MCF 10A (cell line): ENCODE measurements at regions of chr14 and their contacts with region 1.

Region 1: DNA sequence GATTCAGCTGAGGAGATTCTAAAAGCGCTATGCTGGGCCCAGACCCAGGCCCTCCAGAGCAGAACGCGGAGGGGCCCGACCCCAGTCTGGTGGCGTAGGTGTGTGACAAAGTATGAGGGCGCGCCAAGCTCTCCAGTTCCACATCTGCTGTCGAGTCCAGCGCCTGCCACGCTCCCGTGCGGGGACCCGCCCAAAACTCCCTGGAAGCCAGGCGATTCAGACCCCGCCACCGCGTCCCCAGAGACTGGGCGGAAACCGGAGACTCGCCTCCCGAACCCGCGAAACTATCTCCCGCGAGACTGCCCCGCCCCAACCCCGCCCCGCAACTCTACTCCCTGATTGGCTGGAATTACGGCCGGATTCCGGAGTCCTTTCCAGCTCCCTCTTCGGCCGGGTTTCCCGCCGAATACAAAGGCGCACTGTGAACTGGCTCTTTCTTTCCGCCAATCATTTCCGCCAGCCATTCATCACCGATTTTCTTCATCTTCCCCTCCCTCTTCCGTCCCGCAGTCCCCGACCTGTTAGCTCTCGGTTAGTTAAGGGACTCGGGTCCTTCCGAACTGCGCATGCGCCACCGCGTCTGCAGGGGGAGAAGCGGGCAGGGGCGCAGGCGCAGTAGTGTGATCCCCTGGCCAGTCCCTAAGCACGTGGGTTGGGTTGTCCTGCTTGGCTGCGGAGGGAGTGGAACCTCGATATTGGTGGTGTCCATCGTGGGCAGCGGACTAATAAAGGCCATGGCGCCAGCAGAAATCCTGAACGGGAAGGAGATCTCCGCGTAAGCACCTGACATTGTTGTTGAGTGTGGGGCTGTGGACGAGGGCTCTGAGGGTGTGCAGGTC is at the start of gene MTHFD1:
- DNase-seq: peak; percentile 99
- H3K4me3 Mint-ChIP-seq: peak within 1 kb of the TSS; percentile 96
- H3K27ac Mint-ChIP-seq: peak within 1 kb of the TSS; percentile 72
- H3K4me1 Mint-ChIP-seq: peaks cover 22% of the 10 kb centered on the region
- H3K27me3 Mint-ChIP-seq: no peaks in the 10 kb centered on the region
- CTCF ChIP-seq: no peak
- total RNA-seq, gene MTHFD1: 57.6 and 72.7 TPM in 2 replicates

Region 2: GRCh38 chr14:64338616-64339316 is 49.1 kb before region 1 on chr14:
- CTCF ChIA-PET with region 1: interaction called, 4 read pairs
- POLR2A ChIA-PET with region 1: interaction called, 43 read pairs
- intact Hi-C with region 1: no loop called
- DNase-seq: peak; percentile 99
- H3K4me3 Mint-ChIP-seq: peak overlapping the region; percentile 94
- H3K27ac Mint-ChIP-seq: peak overlapping the region; percentile 83
- H3K4me1 Mint-ChIP-seq: peaks cover 6% of the 10 kb centered on the region
- H3K27me3 Mint-ChIP-seq: no peaks in the 10 kb centered on the region
- CTCF ChIP-seq: no peak

Region 3: DNA sequence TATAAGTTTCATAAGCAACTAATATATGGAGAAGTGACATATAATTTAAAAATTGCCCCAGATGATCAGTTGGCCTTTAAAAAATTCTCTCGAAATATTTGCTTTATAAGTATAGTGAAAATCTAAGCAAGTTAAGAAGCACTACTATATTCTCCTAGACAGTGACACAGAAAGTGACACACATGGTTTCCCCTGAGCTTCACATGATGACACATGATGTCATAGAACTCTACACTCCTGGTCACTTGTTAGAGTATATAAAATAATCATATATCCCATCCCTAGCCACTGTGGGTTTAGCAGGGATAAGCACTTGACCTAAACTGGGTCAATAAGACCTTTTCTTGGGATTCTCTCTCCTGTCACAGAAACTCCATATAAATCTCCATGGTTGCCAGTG is 42.4 kb before region 1 on chr14:
- CTCF ChIA-PET with region 1: interaction called, 4 read pairs
- POLR2A ChIA-PET with region 1: interaction called, 10 read pairs
- intact Hi-C with region 1: no loop called
- DNase-seq: no peak
- H3K4me3 Mint-ChIP-seq: no peak overlapping the region
- H3K27ac Mint-ChIP-seq: no peak overlapping the region
- H3K4me1 Mint-ChIP-seq: no peaks in the 10 kb centered on the region
- H3K27me3 Mint-ChIP-seq: no peaks in the 10 kb centered on the region
- CTCF ChIP-seq: no peak

Region 4: DNA sequence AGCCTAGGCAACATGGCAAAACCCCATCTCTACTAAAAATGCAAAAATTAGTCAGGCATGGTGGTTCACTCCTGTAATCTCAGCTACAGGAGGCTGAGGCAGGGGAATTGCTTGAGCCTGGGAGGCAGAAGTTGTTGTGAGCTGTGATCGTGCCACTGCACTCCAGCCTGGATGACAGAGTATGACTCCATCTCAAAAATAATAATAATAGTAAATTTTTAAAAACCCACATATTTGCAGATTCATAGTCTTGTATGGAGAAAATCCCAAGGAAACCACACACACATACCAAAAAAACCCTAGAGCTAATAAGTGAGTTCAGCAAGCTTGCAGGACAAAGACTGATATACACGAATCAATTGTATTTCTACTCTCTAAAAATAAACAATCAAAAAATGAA is 18.7 kb before region 1 on chr14:
- CTCF ChIA-PET with region 1: interaction called, 3 read pairs
- POLR2A ChIA-PET with region 1: interaction called, 30 read pairs
- intact Hi-C with region 1: no loop called
- DNase-seq: no peak
- H3K4me3 Mint-ChIP-seq: no peak overlapping the region
- H3K27ac Mint-ChIP-seq: no peak overlapping the region
- H3K4me1 Mint-ChIP-seq: no peaks in the 10 kb centered on the region
- H3K27me3 Mint-ChIP-seq: no peaks in the 10 kb centered on the region
- CTCF ChIP-seq: no peak

Region 5: DNA sequence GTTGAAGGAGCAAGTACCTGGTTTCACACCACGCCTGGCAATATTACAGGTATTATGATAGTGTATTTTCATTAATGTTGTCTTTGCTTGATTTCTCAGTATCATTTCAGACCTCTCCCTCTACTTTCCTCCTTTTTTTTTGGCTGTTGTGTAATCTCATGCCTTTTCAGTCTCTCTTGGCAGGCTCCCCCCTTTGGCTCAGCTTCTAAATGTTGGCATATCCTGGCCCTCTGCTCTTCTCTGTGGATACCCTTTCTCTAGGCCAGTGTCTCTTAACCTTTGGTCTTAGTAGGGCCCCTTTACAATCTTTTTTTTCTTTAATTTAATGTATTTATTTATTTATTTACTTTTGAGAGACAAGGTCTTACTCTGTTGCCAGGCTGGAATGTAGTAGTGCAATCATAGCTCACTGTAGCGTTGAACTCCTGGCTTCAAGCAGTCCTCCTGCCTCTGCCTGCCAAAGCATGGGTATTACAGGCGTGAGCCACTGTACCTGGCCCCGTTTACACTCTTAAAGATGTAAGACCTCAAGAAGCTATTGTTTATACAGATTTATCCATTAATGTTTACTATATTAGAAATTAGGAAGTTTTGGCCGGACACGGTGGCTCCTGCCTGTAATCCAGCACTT is 13.0 kb after region 1 on chr14:
- CTCF ChIA-PET with region 1: interaction called, 4 read pairs
- POLR2A ChIA-PET with region 1: interaction called, 24 read pairs
- intact Hi-C with region 1: no loop called
- DNase-seq: no peak
- H3K4me3 Mint-ChIP-seq: no peak overlapping the region
- H3K27ac Mint-ChIP-seq: no peak overlapping the region
- H3K4me1 Mint-ChIP-seq: no peaks in the 10 kb centered on the region
- H3K27me3 Mint-ChIP-seq: no peaks in the 10 kb centered on the region
- CTCF ChIP-seq: no peak

Region 6: DNA sequence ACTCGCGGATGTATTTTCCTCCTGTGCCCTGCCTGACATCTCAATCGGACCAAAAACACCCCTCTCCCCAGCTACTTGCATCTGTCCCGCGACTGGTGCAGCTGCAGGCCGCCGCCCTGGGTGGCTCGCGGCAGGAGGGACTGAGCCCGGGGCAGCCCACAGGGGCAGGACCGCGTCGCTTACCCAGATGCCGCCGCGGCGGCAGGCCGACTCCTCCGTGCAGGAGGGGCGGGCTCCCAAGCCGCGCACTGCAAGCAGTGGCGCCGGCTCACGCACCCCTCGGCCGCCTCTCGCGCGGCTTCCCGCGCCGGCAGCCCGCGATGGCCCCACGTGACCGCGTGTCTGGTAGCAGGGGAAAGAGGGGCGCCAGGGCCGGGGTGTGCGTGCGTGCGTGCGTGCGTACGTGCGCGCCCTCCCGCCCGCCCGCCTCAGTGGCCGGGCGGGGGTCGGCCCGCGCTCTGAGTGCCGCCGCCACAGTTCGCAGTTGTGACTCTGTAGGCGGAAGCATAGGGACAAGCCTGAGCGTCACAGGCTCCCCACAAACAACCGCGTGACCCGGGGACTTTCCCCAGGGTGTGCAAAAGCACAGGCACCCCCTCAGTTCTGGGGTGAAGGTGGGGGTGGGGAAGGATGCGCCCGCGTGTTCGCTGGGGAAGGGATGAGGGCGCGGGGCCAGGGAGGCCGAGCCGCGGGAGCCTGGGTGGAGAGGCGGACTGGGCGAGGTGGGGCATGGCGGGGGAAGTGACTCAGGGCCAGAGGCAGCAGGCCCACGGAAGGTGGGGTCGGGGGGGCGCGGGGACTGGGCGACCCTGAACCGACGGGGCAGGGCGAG is 115.8 kb after region 1 on chr14 and contains the start of gene ZBTB25:
- CTCF ChIA-PET with region 1: no interaction called
- POLR2A ChIA-PET with region 1: interaction called, 28 read pairs
- intact Hi-C with region 1: no loop called
- DNase-seq: peak; percentile 90
- H3K4me3 Mint-ChIP-seq: peak within 1 kb of the TSS; percentile 83
- H3K27ac Mint-ChIP-seq: peak within 1 kb of the TSS; percentile 98
- H3K4me1 Mint-ChIP-seq: peaks cover 51% of the 10 kb centered on the region
- H3K27me3 Mint-ChIP-seq: no peaks in the 10 kb centered on the region
- CTCF ChIP-seq: no peak
- total RNA-seq, gene ZBTB25: 11.7 and 15.3 TPM in 2 replicates